ENCODE measurements at regions of chr6 and their contacts with region 1.

Region 1: DNA sequence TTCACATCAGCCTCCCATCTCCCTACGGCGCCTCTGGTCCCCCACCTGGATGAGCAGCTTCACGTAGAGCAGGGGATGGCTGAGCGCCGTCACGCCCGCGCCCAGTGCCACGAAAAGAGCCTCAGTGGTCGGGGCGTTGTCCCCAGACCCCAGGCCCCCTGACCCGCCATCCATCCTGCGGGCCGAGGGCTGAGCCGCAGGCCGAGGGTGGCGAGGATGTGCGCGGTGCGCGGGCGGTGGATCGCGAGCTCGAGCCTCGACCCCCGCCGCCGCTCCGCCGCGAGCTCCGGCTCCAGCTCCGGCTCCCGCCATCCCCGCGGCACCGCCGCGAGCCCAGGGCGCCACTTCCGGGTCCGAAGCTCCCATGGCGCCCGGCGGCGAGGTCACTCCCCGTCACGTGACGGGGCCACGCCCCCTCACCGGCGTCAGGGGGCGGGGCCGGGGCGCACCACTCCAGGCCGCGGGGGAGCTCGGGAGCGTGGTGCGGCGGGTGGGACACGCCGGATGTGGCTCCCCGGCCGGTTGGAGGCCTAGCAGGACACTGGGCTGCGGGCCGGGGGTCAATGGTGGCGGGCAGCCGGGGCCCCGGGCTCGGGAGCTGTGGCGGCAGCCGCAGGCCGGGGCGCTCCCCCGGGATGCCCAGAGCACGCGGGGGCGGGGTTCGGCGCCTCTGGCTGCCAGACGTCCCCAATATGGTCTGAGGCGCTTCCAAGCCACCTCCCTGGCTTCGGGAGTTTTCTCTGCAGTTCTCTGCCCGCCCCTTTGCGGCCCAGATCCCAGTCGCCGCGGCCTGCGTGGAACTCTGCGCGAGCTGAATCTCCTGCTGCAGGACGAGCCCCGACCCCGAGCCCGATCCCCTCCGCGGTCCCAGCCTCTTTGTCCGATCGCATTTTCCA is at the start of gene MTCH1:
- DNase-seq: peak; percentile 85 to 98 (median 92)
- ATAC-seq: peak; percentile 93
- H3K4me3 ChIP-seq: peak within 1 kb of the TSS; percentile 98
- H3K4me3 Mint-ChIP-seq: peak within 1 kb of the TSS in 6 of 10 donors; percentile 98 to 100 (median 100)
- H3K27ac ChIP-seq: peak within 1 kb of the TSS; percentile 96
- H3K27ac Mint-ChIP-seq: peak within 1 kb of the TSS in 7 of 9 donors; percentile 98 to 99 (median 99)
- H3K4me1 ChIP-seq: peaks cover 22 to 27% of the 10 kb centered on the region in 2 donors
- H3K4me1 Mint-ChIP-seq: peaks cover 12 to 26% (median 18%) of the 10 kb centered on the region in 7 donors
- H3K27me3 ChIP-seq: no peaks in the 10 kb centered on the region
- H3K27me3 Mint-ChIP-seq: peaks cover 0 to 17% (median 0%) of the 10 kb centered on the region in 5 donors
- total RNA-seq, gene MTCH1: 123 to 198 (median 130) TPM

Region 2: GRCh38 chr6:36874443-36875249 is 111.4 kb before region 1 on chr6 and contains the start of gene PPIL1:
- CTCF ChIA-PET with region 1: no interaction called
- POLR2A ChIA-PET with region 1: interaction called, 15 read pairs
- intact Hi-C with region 1: no loop called
- DNase-seq: peak; percentile 75 to 92 (median 90)
- ATAC-seq: peak; percentile 92
- H3K4me3 ChIP-seq: peak within 1 kb of the TSS; percentile 92
- H3K4me3 Mint-ChIP-seq: peak within 1 kb of the TSS; percentile 85 to 100 (median 98)
- H3K27ac ChIP-seq: peak within 1 kb of the TSS; percentile 87
- H3K27ac Mint-ChIP-seq: peak within 1 kb of the TSS; percentile 97 to 100 (median 98)
- H3K4me1 ChIP-seq: peaks cover 8 to 21% of the 10 kb centered on the region in 2 donors
- H3K4me1 Mint-ChIP-seq: peaks cover 13 to 54% (median 47%) of the 10 kb centered on the region in 7 donors
- H3K27me3 ChIP-seq: no peaks in the 10 kb centered on the region
- H3K27me3 Mint-ChIP-seq: peaks cover 0 to 7% (median 5%) of the 10 kb centered on the region in 5 donors
- total RNA-seq, gene PPIL1: 3.5 to 34.7 (median 10.3) TPM

Region 3: DNA sequence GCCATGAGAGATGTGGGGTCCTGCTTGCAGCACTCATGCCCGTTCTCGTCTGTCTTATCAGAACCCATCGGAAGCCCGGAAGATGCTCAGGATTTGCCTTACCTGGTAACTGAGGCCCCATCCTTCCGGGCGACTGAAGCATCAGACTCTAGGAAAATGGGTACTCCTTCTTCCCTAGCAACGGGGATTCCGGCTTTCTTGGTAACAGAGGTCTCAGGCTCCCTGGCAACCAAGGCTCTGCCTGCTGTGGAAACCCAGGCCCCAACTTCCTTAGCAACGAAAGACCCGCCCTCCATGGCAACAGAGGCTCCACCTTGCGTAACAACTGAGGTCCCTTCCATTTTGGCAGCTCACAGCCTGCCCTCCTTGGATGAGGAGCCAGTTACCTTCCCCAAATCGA is 23.2 kb before region 1 on chr6:
- CTCF ChIA-PET with region 1: no interaction called
- POLR2A ChIA-PET with region 1: no interaction called
- intact Hi-C with region 1: loop called (anchors 1 to 2 kb)
- DNase-seq: peak; percentile 69 to 89 (median 81)
- ATAC-seq: peak; percentile 82
- H3K4me3 ChIP-seq: no peak overlapping the region
- H3K4me3 Mint-ChIP-seq: peak overlapping the region in 9 of 10 donors; percentile 57 to 80 (median 70)
- H3K27ac ChIP-seq: peak overlapping the region; percentile 40
- H3K27ac Mint-ChIP-seq: peak overlapping the region; percentile 74 to 96 (median 93)
- H3K4me1 ChIP-seq: peaks cover 19 to 24% of the 10 kb centered on the region in 2 donors
- H3K4me1 Mint-ChIP-seq: peaks cover 20 to 55% (median 37%) of the 10 kb centered on the region in 7 donors
- H3K27me3 ChIP-seq: no peaks in the 10 kb centered on the region
- H3K27me3 Mint-ChIP-seq: no peaks in the 10 kb centered on the region

Region 4: DNA sequence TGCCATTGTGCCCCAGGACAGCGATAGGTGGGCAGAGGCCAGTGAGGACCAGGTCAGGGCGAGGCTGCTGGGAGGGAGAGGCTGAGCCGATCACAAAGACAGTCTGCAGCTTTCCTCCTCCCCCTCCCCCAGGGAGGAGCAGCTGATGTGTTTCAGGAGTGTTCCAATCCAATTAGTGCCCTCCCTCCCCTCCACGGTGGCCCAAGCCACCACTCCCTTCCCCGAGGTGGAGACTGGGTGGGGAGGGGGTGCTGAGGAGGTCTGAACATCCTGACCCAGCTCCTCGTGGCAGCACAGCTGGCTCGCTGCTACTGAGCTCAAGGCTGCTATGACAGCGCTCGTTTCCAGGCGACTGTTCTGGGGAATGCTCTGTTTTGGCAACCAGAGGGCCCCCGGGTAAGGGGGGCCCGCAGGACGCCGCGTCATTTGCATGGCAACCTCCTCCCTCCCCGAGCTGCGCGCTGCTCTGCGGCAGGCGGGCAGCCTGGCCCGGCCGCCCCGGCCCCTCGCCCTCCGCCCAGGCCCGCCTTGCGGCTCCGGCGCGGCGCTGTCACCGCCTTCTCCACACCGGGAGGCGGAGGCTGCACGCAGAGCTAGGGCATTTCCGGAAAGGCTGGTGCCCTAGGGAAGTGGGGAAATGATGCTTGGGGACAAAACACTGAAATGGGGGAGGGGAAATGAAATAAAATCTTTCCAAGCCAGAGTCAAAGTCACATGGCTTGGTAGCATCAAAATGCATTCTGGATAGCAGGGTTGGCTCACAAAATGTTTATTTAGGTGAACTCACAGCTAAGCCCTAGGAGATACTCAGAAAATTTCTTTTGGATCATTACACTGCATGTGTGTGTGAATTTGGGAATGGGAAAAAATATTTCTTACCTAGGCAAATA is 116.5 kb after region 1 on chr6:
- CTCF ChIA-PET with region 1: no interaction called
- POLR2A ChIA-PET with region 1: no interaction called
- intact Hi-C with region 1: no loop called
- DNase-seq: peak; percentile 59 to 79 (median 75)
- ATAC-seq: peak; percentile 92
- H3K4me3 ChIP-seq: peak overlapping the region; percentile 47
- H3K4me3 Mint-ChIP-seq: peak overlapping the region; percentile 74 to 86 (median 80)
- H3K27ac ChIP-seq: peak overlapping the region; percentile 46
- H3K27ac Mint-ChIP-seq: peak overlapping the region; percentile 48 to 92 (median 87)
- H3K4me1 ChIP-seq: peaks cover 14 to 19% of the 10 kb centered on the region in 2 donors
- H3K4me1 Mint-ChIP-seq: peaks cover 16 to 55% (median 32%) of the 10 kb centered on the region in 7 donors
- H3K27me3 ChIP-seq: no peaks in the 10 kb centered on the region
- H3K27me3 Mint-ChIP-seq: no peaks in the 10 kb centered on the region